HEK293T (cell line): ENCODE measurements at regions of chr14 and their contacts with region 1.

Region 1: DNA sequence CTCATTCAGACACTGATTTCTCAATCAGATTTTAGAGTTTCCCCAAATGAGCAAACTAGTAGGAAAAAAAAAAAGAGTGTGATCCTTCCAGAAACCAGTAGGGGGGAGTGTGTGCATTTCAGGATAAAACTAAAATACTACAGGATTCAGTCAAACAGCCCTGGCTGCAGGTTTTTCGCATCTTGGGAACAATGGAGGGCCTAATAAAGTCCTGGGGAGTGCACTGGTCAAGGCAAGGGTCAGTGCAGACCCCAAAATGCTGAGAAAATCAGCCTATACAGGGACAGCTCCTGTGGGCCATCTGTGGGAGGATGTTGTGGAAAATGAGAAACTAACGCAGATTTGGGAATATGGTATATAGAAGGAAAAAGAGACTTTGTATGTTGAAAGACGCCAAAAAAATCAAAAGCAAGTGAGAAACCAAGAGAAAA is 22.2 kb upstream of the ABCD4 start:
- DNase-seq: peak; percentile 65

Region 2: GRCh38 chr14:74480051-74480450 is 155.1 kb after region 1 on chr14:
- CTCF ChIA-PET with region 1: interaction called, 10 read pairs
- POLR2A ChIA-PET with region 1: no interaction called
- DNase-seq: no peak